Upper lobe of right lung (tissue), 1 donor: ENCODE measurements at regions of chr3 and their contacts with region 1.

Region 1: GRCh38 chr3:159804726-159805410 is 183.8 kb upstream of the IL12A start:
- DNase-seq: no peak
- ATAC-seq: peak; percentile 97
- H3K4me3 ChIP-seq: no peak overlapping the region
- H3K27ac ChIP-seq: no peak overlapping the region
- H3K4me1 ChIP-seq: peaks cover 31% of the 10 kb centered on the region
- H3K27me3 ChIP-seq: no peaks in the 10 kb centered on the region
- CTCF ChIP-seq: peak; percentile 87

Region 2: DNA sequence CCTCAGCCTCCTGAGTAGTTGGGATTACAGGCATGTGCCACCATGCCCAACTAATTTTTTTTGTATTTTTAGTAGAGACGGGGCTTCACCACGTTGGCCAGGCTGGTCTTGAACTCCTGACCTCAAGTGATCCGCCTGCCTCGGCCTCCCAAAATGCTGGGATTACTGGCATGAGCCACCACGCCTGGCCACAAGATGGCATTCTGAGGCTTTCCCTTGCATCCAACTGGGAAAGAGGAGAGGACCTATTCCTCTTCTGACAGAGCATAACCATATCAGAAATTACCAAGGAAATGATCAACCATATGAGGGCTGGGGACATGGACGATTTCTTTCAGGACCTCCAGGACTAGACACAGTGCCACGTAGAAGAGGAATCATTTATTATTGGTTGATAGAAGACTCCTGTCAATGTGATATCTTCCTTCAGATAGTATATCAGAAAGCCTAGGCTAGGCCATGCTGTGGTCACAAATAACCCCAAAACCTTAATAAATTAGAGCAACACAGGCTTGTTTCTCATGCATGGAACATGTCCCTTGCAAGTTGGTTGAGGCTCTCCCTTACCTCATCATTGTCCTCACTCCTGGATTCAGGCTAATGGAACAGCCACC is 188.5 kb before region 1 on chr3:
- intact Hi-C with region 1: loop called (anchors 10 kb)
- DNase-seq: peak; percentile 68
- ATAC-seq: peak; percentile 86
- H3K4me3 ChIP-seq: no peak overlapping the region
- H3K27ac ChIP-seq: no peak overlapping the region
- H3K4me1 ChIP-seq: no peaks in the 10 kb centered on the region
- H3K27me3 ChIP-seq: no peaks in the 10 kb centered on the region
- CTCF ChIP-seq: peak; percentile 66

Region 3: GRCh38 chr3:159724627-159725026 is 80.2 kb before region 1 on chr3:
- intact Hi-C with region 1: no loop called
- DNase-seq: no peak
- ATAC-seq: no peak
- H3K4me3 ChIP-seq: no peak overlapping the region
- H3K27ac ChIP-seq: no peak overlapping the region
- H3K4me1 ChIP-seq: no peaks in the 10 kb centered on the region
- H3K27me3 ChIP-seq: no peaks in the 10 kb centered on the region
- CTCF ChIP-seq: no peak